Activated naive CD4-positive, alpha-beta T cell treated with anti-CD3 and anti-CD28 coated beads for 36 hours (primary cell): ENCODE measurements at regions of chr3 and their contacts with region 1.

Region 1: DNA sequence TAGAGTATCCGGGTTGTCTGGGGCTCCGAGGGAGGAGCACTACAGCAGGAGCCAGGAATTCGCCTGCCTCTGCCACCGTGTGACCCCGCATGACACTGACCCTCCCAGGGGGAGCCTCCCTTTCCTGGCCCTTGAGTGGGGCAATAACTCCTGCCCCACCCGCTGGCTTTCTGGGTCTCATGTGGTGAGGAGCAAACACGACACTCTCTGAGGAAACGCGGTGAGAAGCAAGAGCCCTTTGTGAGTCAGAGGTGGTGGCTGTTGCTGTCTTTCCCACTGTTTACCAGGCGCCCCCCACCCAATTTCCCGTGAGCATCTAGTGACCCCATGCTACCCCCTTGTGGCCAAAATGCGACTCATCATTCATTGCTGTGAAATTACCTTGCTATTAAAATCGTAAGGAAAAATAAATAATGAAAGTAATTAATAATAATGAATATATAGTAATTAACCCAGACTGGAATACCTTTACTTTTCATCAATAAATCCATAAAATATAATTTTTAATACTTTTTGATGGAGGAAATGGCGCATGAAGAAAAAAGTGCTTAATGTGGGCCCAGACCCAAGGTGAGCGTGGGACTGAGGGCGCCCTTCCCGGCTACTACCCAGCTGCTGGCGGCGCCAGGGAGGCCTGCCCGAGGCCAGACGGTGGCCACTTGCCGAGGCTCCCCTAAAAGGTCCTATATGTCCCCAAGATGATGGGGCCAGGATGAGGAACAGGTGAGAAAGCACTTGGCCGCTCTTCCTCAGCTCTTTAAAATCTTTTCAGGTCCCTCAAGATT is 29.3 kb downstream of the CCNL1 start:
- DNase-seq: peak; percentile 85
- H3K4me3 Mint-ChIP-seq: peak overlapping the region; percentile 61
- H3K27ac Mint-ChIP-seq: peak overlapping the region; percentile 98
- H3K4me1 Mint-ChIP-seq: peaks cover 48% of the 10 kb centered on the region
- H3K27me3 Mint-ChIP-seq: no peaks in the 10 kb centered on the region

Region 2: DNA sequence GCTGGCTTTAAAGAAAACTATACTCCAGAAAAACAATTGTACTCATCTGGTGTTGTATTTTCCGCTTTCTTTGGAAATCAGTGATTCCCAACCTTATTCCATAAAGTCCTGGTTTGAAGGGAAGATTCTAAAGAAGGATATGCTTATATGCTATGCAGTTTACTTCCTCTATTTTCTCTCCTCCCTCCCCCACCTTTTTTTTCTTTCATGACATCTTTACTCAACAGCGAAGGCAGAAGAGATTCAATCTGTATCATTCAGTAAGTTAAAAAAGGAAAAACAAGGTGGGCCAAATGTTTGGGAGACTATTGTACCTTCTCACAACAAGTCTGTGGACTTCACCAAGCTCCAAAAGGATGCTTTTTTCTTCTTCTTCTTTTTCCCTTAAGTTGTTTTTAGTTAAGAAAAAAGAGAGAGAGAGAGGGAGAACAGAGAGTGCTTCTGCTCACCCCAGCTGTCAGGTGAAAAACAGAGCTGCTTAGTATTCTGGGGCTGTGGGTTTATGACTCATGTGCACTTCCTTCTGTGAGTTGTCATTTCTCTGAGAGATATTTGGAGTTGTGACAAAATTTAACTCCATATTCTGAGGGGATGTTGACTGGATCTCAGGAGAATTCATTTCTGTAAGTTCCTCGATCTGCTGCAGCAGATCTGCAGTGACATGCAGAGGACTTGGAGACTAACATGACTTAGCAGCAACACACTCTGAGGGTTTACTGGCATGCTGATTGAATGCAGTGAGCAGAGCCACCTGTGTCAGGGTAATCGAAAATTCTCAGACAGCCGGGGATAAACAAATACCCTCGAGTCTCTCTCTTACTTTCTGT is 646.5 kb before region 1 on chr3:
- CTCF ChIA-PET with region 1: no interaction called
- intact Hi-C with region 1: loop called (anchors 1 kb)
- DNase-seq: peak; percentile 70
- H3K4me3 Mint-ChIP-seq: peak overlapping the region; percentile 51
- H3K27ac Mint-ChIP-seq: peak overlapping the region; percentile 81
- H3K4me1 Mint-ChIP-seq: peaks cover 42% of the 10 kb centered on the region
- H3K27me3 Mint-ChIP-seq: no peaks in the 10 kb centered on the region

Region 3: GRCh38 chr3:156554842-156555687 is 575.6 kb before region 1 on chr3 and contains the start of gene SSR3:
- CTCF ChIA-PET with region 1: interaction called, 3 read pairs
- intact Hi-C with region 1: loop called (anchors 1 kb)
- DNase-seq: peak; percentile 99
- H3K4me3 Mint-ChIP-seq: peak within 1 kb of the TSS; percentile 90
- H3K27ac Mint-ChIP-seq: peak within 1 kb of the TSS; percentile 86
- H3K4me1 Mint-ChIP-seq: peaks cover 40% of the 10 kb centered on the region
- H3K27me3 Mint-ChIP-seq: no peaks in the 10 kb centered on the region
- total RNA-seq, gene SSR3: 128 to 138 TPM

Region 4: DNA sequence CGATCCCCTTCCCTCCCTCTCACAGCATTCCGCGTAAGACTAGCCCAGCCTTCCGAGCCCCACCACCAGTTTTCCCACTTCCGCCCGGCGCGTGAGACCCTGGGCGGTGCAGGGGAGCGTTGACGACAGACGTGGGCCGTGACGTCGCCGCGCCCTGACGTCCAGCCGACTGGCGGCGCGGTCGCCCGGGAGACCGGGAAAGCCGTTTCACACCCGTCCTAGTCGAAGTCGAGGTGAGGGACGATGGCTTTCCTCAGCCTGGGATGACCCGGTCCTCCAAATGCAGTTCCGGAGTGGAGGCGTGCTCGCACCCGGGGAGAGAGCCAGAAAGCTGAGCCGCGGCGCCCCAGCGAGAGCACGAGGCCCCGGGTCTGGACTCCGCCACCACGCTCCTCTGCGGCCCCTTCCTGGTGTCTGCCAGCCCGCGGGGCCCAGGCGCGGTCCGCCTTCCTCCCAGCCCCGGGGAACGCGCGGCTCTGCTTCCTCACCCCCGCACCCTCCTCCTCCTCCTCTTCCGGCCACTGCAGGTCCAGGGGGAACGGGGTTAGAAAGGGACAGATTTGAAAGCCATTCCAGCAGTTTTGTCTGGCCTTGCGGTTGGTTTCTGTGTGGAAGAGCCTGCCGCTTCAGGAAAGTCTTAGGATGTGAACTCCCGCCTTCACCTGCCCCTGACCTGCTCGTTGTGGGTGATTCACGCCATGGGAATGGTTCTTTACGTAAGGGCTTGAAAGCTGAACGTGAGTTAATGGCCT is 304.3 kb before region 1 on chr3 and contains the start of gene LEKR1:
- CTCF ChIA-PET with region 1: no interaction called
- intact Hi-C with region 1: loop called (anchors 1 kb)
- DNase-seq: peak; percentile 69
- H3K4me3 Mint-ChIP-seq: peak within 1 kb of the TSS; percentile 93
- H3K27ac Mint-ChIP-seq: peak within 1 kb of the TSS; percentile 92
- H3K4me1 Mint-ChIP-seq: peaks cover 16% of the 10 kb centered on the region
- H3K27me3 Mint-ChIP-seq: no peaks in the 10 kb centered on the region
- total RNA-seq, gene LEKR1: 0.43 to 0.77 TPM

Region 5: DNA sequence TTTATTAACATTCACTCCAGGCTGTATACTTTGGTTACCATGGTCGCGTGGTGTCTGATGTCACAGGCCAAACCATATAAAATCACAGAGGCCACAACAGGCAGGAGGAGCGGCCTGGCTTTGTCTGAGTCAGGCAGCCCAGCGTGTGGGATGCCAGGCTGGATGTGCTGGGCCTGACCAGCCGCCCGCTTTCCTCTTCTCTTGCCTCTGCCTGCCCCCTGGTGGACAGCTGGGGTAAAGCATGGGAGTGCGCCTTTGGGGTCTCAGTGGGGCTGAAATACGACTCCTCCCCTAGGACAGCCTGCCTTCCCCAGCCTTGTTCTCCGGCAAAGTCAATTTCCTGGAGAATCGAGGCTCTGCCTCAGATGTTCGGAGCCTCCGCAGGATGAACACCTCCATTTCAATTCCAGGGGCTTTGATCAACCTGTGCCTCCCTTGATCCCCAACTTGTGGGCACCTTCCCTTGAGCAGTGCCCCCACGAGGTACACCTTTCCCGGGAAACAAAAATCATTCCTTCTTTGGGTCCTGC is 48.9 kb before region 1 on chr3:
- CTCF ChIA-PET with region 1: interaction called, 54 read pairs
- intact Hi-C with region 1: no loop called
- DNase-seq: peak; percentile 86
- H3K4me3 Mint-ChIP-seq: no peak overlapping the region
- H3K27ac Mint-ChIP-seq: no peak overlapping the region
- H3K4me1 Mint-ChIP-seq: peaks cover 9% of the 10 kb centered on the region
- H3K27me3 Mint-ChIP-seq: no peaks in the 10 kb centered on the region

Region 6: DNA sequence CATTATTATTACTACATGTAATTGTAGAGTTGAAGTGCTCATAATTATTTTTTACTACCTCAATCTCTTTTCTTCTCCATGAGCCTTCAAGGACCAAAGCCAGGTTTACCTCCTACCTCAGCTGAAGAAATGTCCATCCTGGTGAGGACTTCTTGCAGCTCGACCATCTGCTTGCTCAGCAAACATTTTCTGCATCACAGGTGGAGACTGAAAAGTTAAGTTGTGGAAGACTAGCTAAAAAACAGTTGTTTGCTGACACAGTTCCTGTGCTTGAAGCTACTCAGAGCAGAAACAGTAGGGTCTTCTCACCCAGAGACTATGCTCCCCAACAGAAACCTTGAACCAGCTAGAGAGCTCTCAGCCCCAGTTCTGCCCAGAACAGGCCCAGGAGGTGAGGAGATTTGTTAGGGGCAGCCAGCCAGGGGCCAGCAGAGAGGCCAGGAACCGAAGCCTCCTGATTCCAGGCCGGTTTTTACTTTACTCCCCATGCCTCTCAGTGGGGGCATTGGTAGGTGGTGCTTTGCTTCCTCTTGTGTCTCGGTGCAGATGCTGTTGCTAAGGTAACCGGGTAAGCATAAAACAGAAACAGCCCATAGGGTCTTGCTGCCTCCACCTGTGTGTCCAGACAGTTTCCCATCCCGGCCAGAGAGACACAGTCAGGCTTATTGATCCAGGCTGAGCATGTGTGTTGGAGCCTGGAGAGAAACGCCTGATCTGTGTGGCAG is 25.6 kb before region 1 on chr3:
- CTCF ChIA-PET with region 1: interaction called, 6 read pairs
- intact Hi-C with region 1: loop called (anchors 1 kb)
- DNase-seq: no peak
- H3K4me3 Mint-ChIP-seq: no peak overlapping the region
- H3K27ac Mint-ChIP-seq: no peak overlapping the region
- H3K4me1 Mint-ChIP-seq: peaks cover 21% of the 10 kb centered on the region
- H3K27me3 Mint-ChIP-seq: no peaks in the 10 kb centered on the region